OCI-LY7 (cell line): ENCODE measurements at regions of chr10 and their contacts with region 1.

Region 1: DNA sequence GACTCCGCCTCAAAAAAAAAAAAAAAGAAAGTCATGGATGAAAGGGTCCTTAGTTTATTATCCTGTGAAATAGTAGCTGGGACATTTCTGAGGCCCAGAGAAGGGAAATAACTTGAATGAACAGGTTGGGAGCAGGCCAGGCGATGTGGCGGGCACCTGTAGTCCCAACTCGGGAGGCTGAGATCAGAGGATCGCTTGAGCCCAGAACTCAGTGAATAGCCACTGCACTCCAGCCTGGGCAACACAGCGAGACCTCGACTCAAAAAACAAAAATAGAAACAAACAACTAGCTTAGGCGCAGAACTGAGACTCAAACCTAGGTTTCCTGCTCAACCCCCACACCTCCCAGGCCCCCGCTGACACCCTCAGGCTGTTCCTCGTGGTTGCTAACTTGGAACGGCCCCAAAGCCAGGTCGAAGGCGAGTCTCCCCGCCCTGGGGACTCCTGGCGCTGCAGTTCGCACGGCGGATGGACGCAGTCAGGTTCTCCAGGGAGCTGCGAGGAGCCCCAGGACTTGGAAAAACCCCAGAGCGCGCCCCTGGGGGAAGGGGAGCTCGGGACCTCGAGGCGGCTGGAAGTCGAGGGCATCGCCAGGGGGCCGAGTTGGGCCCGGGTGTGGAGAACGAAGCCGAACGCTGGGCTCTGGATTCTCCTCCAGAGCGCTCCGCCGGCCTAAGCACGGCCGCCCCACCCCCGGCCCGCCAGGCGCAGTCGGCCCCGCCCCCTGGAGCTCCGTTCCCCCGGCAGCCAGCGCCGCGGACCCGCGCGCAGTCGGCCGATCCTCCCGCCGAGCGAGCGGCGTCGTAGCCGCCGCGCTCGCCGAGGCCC is at the start of gene STOX1:
- DNase-seq: peak; percentile 78
- H3K4me3 ChIP-seq: peak within 1 kb of the TSS; percentile 69
- H3K27ac ChIP-seq: peak within 1 kb of the TSS; percentile 34
- H3K4me1 ChIP-seq: peaks cover 9% of the 10 kb centered on the region
- CTCF ChIP-seq: 0 out of 2 replicates have a peak, but pooled peaks have one; percentile 19
- total RNA-seq, gene STOX1: 2.8 and 3.6 TPM in 2 replicates

Region 2: DNA sequence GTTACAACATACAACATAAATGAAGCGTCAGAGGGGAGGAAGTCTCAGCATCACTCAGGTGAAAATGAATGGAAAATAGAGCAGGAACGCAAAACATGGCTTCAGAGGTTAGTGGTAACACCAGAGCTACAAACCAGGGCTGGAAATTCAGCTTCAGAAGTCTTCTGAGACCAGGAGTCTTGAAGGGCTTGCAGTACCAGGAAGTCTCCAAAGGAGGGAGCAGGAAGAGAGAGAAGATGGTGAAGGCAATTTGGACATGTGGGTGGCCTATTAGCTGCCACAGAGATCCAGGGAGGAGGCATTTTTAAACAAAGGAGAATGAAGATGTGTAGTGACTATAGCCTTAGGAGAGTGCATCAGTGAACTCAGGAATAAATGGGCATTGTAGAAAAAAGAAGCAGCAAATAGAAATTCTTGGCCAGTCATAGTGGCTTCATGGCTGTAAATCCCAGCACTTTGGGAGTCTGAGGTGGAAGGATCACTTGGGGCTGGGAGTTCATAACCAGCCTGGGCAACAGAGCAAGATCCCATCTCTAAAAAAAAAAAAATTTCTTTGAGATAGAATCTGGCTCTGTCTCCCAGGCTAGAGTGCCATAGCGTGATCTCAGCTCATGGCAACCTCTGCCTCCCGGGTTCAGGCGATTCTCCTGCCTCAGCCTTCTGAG is 276.1 kb before region 1 on chr10:
- CTCF ChIA-PET with region 1: interaction called, 3 read pairs
- POLR2A ChIA-PET with region 1: interaction called, 3 read pairs
- intact Hi-C with region 1: loop called (anchors 10 kb)
- DNase-seq: peak; percentile 72
- H3K4me3 ChIP-seq: no peak overlapping the region
- H3K27ac ChIP-seq: no peak overlapping the region
- H3K4me1 ChIP-seq: no peaks in the 10 kb centered on the region
- CTCF ChIP-seq: peak; percentile 83

Region 3: GRCh38 chr10:68955832-68956532 is 129.0 kb after region 1 on chr10 and contains the start of gene DDX21:
- CTCF ChIA-PET with region 1: interaction called, 12 read pairs
- POLR2A ChIA-PET with region 1: interaction called, 4 read pairs
- intact Hi-C with region 1: no loop called
- DNase-seq: peak; percentile 94
- H3K4me3 ChIP-seq: peak within 1 kb of the TSS; percentile 89
- H3K27ac ChIP-seq: peak within 1 kb of the TSS; percentile 86
- H3K4me1 ChIP-seq: peaks cover 36% of the 10 kb centered on the region
- CTCF ChIP-seq: peak; percentile 89
- total RNA-seq, gene DDX21: 107 and 133 TPM in 2 replicates